Activated CD4-positive, alpha-beta memory T cell treated with anti-CD3 and anti-CD28 coated beads for 36 hours (primary cell): ENCODE measurements at regions of chr10 and their contacts with region 1.

Region 1: GRCh38 chr10:97037365-97038361 is 148.1 kb downstream of the SLIT1 start:
- DNase-seq: peak; percentile 80
- H3K4me3 Mint-ChIP-seq: peak overlapping the region; percentile 49
- H3K27ac Mint-ChIP-seq: no peak overlapping the region
- H3K4me1 Mint-ChIP-seq: peaks cover 8% of the 10 kb centered on the region
- H3K27me3 Mint-ChIP-seq: peaks cover 8% of the 10 kb centered on the region

Region 2: DNA sequence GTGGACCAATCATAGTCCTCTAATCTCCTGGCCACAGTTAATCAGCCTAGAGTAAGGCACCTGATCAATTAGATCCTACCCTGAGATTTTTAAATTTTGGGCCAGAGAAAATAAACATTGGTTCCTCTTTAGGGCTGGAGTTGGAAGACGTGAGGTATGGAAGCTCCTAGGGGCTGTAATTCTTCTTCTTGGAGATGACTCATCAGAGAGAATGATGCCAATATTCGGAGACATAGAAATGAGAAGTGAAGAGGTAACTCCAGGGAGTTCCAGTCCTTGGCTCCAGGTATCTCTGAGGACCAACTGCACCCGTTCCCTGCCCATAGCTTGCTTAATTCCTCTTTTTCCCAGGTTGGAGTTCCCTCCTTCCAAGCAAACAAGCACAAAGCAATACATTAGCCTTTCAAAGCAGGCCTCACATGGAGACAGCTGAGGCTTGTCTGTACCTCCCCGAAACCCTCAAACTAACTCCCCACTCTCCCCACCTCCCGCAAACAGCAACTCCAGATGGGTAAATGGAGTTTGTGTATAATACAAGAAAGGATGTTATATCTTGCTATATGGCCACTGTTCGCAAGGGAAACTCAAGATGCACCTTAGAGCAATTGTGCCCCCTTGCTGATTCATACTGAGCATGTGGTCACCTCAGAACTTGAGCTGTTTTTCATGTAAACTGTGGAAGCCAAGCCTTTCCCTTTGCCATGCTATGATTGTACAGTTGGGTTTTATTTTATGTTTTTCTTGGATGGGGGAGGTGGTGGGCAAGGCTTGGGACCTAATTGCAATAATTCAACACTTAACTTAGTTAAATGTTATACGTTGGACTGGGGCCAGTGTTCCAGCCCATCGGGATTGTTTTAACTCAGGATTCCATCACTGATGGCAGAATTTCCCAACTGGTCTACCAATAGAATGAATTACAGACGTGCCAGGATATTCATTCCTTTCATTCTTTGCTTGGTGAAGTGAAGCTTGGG is 346.6 kb before region 1 on chr10:
- CTCF ChIA-PET with region 1: no interaction called
- POLR2A ChIA-PET with region 1: no interaction called
- intact Hi-C with region 1: no loop called
- DNase-seq: no peak
- H3K4me3 Mint-ChIP-seq: no peak overlapping the region
- H3K27ac Mint-ChIP-seq: no peak overlapping the region
- H3K4me1 Mint-ChIP-seq: peaks cover 21% of the 10 kb centered on the region
- H3K27me3 Mint-ChIP-seq: no peaks in the 10 kb centered on the region

Region 3: GRCh38 chr10:96840841-96841518 is 196.7 kb before region 1 on chr10:
- CTCF ChIA-PET with region 1: no interaction called
- POLR2A ChIA-PET with region 1: no interaction called
- intact Hi-C with region 1: no loop called
- DNase-seq: peak; percentile 16
- H3K4me3 Mint-ChIP-seq: no peak overlapping the region
- H3K27ac Mint-ChIP-seq: peak overlapping the region; percentile 62
- H3K4me1 Mint-ChIP-seq: peaks cover 54% of the 10 kb centered on the region
- H3K27me3 Mint-ChIP-seq: no peaks in the 10 kb centered on the region

Region 4: DNA sequence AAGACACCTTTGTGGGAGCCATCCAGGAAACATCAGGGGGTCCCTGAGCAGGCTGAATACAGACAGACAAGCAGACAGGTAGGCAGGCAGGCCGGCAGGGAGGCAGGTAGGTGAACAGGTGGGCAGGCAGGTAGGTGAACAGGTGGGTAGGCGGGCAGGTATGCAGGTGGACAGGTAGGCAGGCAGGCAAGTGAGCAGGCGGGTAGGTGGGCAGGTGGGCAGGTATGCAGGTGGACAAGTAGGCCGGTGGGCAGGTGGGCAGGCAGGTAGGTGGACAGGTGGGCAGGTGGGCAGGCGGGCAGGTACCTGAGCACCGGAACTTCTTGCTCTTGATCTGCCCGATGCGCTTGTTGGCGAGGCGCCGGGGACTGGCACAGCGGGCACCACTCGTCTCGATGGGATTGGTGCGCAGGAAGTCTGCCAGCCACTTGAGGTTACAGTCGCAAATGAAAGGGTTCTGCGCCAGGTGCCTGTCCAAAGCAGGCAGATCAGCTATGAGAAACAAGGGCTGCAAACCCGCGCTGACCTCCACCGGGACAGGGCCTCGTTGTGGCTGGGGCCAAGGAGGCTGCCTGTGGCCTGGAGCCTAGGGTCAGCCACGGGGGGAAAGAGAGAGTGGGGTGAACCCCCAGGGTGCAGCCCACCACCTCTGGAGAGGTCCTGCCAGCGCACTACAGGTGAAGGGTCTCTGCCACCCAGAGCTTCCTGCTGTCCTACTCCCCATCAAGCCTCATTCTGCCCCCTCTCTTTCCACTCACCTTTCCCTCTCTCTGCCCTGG is 11.2 kb after region 1 on chr10:
- CTCF ChIA-PET with region 1: interaction called, 23 read pairs
- POLR2A ChIA-PET with region 1: no interaction called
- intact Hi-C with region 1: no loop called
- DNase-seq: no peak
- H3K4me3 Mint-ChIP-seq: no peak overlapping the region
- H3K27ac Mint-ChIP-seq: no peak overlapping the region
- H3K4me1 Mint-ChIP-seq: no peaks in the 10 kb centered on the region
- H3K27me3 Mint-ChIP-seq: peaks cover 11% of the 10 kb centered on the region

Region 5: DNA sequence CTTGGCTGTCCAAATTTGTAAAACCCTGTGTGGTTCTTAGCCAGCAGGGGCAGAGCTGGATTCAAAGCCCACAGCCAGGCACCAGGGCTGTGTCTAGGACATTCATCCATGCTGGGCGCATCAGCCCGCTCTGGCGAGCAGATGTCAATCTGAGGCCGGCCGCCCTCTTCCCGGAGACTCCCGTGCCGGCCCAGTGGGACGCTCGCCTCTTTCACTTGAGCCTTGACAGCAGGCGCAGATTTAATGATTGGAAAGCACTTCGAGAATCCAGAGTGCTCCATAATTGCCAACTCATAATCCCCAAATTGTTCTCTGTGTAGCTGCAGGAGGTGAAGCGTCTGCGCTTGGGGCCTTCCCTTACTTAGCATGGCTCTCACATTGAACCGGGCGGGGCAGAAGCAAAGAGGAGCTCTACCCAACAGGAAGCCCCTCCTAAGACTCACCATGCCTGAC is 111.4 kb after region 1 on chr10:
- CTCF ChIA-PET with region 1: no interaction called
- POLR2A ChIA-PET with region 1: no interaction called
- intact Hi-C with region 1: no loop called
- DNase-seq: no peak
- H3K4me3 Mint-ChIP-seq: no peak overlapping the region
- H3K27ac Mint-ChIP-seq: no peak overlapping the region
- H3K4me1 Mint-ChIP-seq: no peaks in the 10 kb centered on the region
- H3K27me3 Mint-ChIP-seq: peaks cover 5% of the 10 kb centered on the region

Region 6: DNA sequence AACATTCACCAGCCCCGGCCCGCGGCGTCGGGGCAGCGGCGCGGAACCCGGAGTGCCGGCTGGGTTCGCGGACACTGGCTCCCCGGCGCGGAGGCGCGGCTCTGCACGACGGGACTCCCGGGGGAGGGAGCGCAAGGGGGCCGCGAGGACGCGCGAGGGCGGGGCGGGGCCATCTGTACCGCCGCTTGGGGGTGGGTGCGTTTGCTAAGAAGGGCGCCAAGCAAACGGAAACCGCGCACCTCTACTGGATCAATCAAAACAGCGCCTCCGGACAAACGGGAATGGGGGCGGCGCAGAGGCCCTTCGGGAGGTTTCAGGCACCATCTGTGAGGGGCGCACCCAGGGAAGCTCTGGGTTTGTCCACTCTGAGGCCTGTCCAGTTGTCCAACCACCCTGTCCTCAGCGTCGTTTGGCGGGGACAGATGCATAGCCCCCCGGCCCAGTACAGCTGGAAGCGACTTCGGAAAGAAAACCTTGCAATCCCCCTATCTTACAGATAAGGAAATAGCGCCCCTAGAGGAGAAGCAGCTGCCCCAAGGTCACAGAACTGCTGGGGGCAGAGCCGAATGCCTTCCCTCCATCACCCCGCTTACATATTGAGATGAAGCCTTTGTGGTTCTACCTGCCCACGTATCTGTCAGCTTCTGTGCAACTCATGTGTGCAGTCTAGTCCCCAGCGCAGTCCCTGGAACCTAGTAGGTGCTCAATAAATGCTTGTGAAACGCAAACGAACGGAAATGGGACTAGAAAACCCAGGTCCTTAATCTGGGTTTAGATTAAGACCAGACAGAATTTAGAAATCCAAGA is 158.8 kb after region 1 on chr10:
- CTCF ChIA-PET with region 1: interaction called, 24 read pairs
- POLR2A ChIA-PET with region 1: no interaction called
- intact Hi-C with region 1: no loop called
- DNase-seq: peak; percentile 73
- H3K4me3 Mint-ChIP-seq: peak overlapping the region; percentile 64
- H3K27ac Mint-ChIP-seq: no peak overlapping the region
- H3K4me1 Mint-ChIP-seq: peaks cover 10% of the 10 kb centered on the region
- H3K27me3 Mint-ChIP-seq: peaks cover 24% of the 10 kb centered on the region

Region 7: GRCh38 chr10:97217299-97217698 is 179.6 kb after region 1 on chr10:
- CTCF ChIA-PET with region 1: interaction called, 57 read pairs
- POLR2A ChIA-PET with region 1: no interaction called
- intact Hi-C with region 1: no loop called
- DNase-seq: no peak
- H3K4me3 Mint-ChIP-seq: no peak overlapping the region
- H3K27ac Mint-ChIP-seq: no peak overlapping the region
- H3K4me1 Mint-ChIP-seq: peaks cover 29% of the 10 kb centered on the region
- H3K27me3 Mint-ChIP-seq: no peaks in the 10 kb centered on the region

Region 8: GRCh38 chr10:97222326-97222961 is 184.8 kb after region 1 on chr10:
- CTCF ChIA-PET with region 1: interaction called, 13 read pairs
- POLR2A ChIA-PET with region 1: no interaction called
- intact Hi-C with region 1: no loop called
- DNase-seq: no peak
- H3K4me3 Mint-ChIP-seq: no peak overlapping the region
- H3K27ac Mint-ChIP-seq: no peak overlapping the region
- H3K4me1 Mint-ChIP-seq: peaks cover 29% of the 10 kb centered on the region
- H3K27me3 Mint-ChIP-seq: no peaks in the 10 kb centered on the region

Region 9: GRCh38 chr10:97234400-97234799 is 196.7 kb after region 1 on chr10:
- CTCF ChIA-PET with region 1: interaction called, 26 read pairs
- POLR2A ChIA-PET with region 1: no interaction called
- intact Hi-C with region 1: no loop called
- DNase-seq: no peak
- H3K4me3 Mint-ChIP-seq: no peak overlapping the region
- H3K27ac Mint-ChIP-seq: no peak overlapping the region
- H3K4me1 Mint-ChIP-seq: peaks cover 18% of the 10 kb centered on the region
- H3K27me3 Mint-ChIP-seq: no peaks in the 10 kb centered on the region